B cell (primary cell): ENCODE measurements at regions of chr9 and their contacts with region 1.

Region 1: DNA sequence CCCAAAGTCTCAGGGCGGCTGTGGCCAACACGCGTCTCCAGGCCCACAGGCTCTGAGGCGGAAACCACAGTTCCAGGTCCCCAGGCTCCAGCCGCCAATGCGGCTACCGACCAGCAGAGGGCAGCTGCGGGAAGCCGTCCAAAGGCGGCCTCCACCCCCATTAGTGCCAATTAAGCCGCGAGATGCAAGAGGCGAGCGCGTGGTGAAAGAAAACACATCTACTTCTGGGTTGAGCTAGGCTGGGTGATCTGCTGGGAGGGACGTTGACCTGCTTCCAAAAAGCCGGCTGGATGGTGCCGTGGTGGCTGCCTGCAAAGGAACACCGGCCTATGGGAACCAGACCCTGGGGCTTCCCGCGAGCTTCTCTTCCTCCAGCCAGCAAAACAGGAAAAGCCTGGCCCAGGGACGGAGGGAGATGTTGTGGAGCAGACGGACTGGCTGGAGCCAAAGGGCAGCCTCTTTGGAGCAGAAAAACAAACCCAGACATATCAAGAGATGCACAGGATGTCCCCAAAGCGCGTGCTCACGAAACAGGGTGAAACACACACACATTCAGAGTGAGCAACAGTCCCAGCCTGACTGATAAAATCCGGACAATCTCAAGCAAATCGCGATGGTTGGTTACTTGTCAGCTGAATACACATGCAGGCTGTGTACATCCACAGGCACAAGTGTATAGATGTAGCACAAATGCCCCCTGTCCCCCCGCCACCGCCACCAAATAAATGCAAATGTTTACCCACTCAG is 187.1 kb upstream of the BRINP1 start:
- DNase-seq: peak; percentile 44
- ATAC-seq: peak; percentile 56
- H3K4me3 ChIP-seq: no peak overlapping the region
- H3K4me3 Mint-ChIP-seq: peak overlapping the region; percentile 11
- H3K27ac ChIP-seq: no peak overlapping the region
- H3K27ac Mint-ChIP-seq: no peak overlapping the region
- H3K4me1 ChIP-seq: peaks cover 0 to 7% of the 10 kb centered on the region in 2 donors
- H3K4me1 Mint-ChIP-seq: peaks cover 6% of the 10 kb centered on the region
- H3K27me3 ChIP-seq: peaks cover 0 to 6% (median 3%) of the 10 kb centered on the region in 4 experiments
- H3K27me3 Mint-ChIP-seq: peaks cover 32% of the 10 kb centered on the region
- CTCF ChIP-seq: peak; percentile 70

Region 2: GRCh38 chr9:119500072-119500771 is 56.1 kb before region 1 on chr9:
- CTCF ChIA-PET with region 1: no interaction called
- POLR2A ChIA-PET with region 1: no interaction called
- intact Hi-C with region 1: no loop called
- DNase-seq: no peak
- ATAC-seq: no peak
- H3K4me3 ChIP-seq: no peak overlapping the region
- H3K4me3 Mint-ChIP-seq: no peak overlapping the region
- H3K27ac ChIP-seq: no peak overlapping the region
- H3K27ac Mint-ChIP-seq: no peak overlapping the region
- H3K4me1 ChIP-seq: no peaks in the 10 kb centered on the region
- H3K4me1 Mint-ChIP-seq: no peaks in the 10 kb centered on the region
- H3K27me3 ChIP-seq: no peaks in the 10 kb centered on the region
- H3K27me3 Mint-ChIP-seq: no peaks in the 10 kb centered on the region
- CTCF ChIP-seq: no peak

Region 3: GRCh38 chr9:119588874-119589744 is 32.8 kb after region 1 on chr9:
- CTCF ChIA-PET with region 1: no interaction called
- POLR2A ChIA-PET with region 1: no interaction called
- intact Hi-C with region 1: no loop called
- DNase-seq: no peak
- ATAC-seq: no peak
- H3K4me3 ChIP-seq: no peak overlapping the region
- H3K4me3 Mint-ChIP-seq: no peak overlapping the region
- H3K27ac ChIP-seq: no peak overlapping the region
- H3K27ac Mint-ChIP-seq: no peak overlapping the region
- H3K4me1 ChIP-seq: no peaks in the 10 kb centered on the region
- H3K4me1 Mint-ChIP-seq: no peaks in the 10 kb centered on the region
- H3K27me3 ChIP-seq: no peaks in the 10 kb centered on the region
- H3K27me3 Mint-ChIP-seq: peaks cover 2% of the 10 kb centered on the region
- CTCF ChIP-seq: no peak

Region 4: GRCh38 chr9:119968836-119969707 is 412.8 kb after region 1 on chr9:
- CTCF ChIA-PET with region 1: interaction called, 36 read pairs
- POLR2A ChIA-PET with region 1: no interaction called
- intact Hi-C with region 1: no loop called
- DNase-seq: peak; percentile 52
- ATAC-seq: peak; percentile 70
- H3K4me3 ChIP-seq: no peak overlapping the region
- H3K4me3 Mint-ChIP-seq: no peak overlapping the region
- H3K27ac ChIP-seq: no peak overlapping the region
- H3K27ac Mint-ChIP-seq: no peak overlapping the region
- H3K4me1 ChIP-seq: peaks cover 0 to 2% of the 10 kb centered on the region in 2 donors
- H3K4me1 Mint-ChIP-seq: peaks cover 2% of the 10 kb centered on the region
- H3K27me3 ChIP-seq: no peaks in the 10 kb centered on the region
- H3K27me3 Mint-ChIP-seq: peaks cover 22% of the 10 kb centered on the region
- CTCF ChIP-seq: peak; percentile 88